BJ (cell line): ENCODE measurements at regions of chr6 and their contacts with region 1.

Region 1: DNA sequence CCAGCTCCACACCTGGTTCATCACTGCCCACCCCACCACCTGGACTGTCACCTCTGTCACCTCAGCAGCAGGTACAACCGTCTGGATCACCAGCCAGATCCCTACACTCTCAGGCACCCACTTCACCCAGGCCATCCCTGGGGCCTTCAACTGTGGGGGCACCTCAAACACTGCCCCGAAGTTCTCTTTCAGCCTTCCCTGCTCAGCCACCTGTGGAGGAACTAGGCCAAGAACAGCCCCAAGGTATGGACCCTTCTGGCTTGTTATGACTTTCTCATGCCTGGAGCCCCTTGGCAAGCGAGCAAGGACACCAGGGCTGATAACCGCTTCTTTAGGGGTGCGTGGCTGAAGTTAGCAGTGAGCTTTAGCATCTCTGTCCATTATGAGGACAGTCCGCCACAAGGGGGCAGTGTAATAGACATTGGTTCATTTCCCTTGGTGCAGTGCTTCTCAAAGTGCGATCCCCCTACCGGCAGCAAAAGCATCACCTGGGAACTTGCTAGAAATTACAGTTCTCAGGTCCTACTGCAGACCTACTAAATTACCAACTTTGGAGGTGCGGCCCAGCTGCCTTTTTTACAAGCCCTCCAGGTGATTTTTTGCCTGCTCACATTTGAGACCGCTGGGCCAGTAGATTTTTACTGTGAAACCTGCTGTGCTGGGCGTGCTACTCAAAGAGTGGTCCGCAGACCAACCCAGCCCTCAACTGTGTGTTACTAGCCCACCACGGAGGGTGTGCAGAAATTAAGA is 32.5 kb downstream of the PNPLA1 start:
- DNase-seq: peak; percentile 26
- H3K4me3 ChIP-seq: no peak overlapping the region
- H3K27me3 ChIP-seq: peaks cover 4% of the 10 kb centered on the region
- CTCF ChIP-seq: peak; percentile 96

Region 2: GRCh38 chr6:36285187-36285671 is 17.2 kb before region 1 on chr6:
- CTCF ChIA-PET with region 1: interaction called, 29 read pairs
- POLR2A ChIA-PET with region 1: interaction called, 3 read pairs
- DNase-seq: no peak
- H3K4me3 ChIP-seq: no peak overlapping the region
- H3K27me3 ChIP-seq: peaks cover 32% of the 10 kb centered on the region
- CTCF ChIP-seq: no peak

Region 3: GRCh38 chr6:36290661-36291620 is 11.5 kb before region 1 on chr6:
- CTCF ChIA-PET with region 1: interaction called, 27 read pairs
- POLR2A ChIA-PET with region 1: interaction called, 3 read pairs
- DNase-seq: no peak
- H3K4me3 ChIP-seq: no peak overlapping the region
- H3K27me3 ChIP-seq: peaks cover 10% of the 10 kb centered on the region
- CTCF ChIP-seq: no peak

Region 4: GRCh38 chr6:36314221-36315014 is 12.0 kb after region 1 on chr6:
- CTCF ChIA-PET with region 1: interaction called, 72 read pairs
- POLR2A ChIA-PET with region 1: no interaction called
- DNase-seq: no peak
- H3K4me3 ChIP-seq: no peak overlapping the region
- H3K27me3 ChIP-seq: peaks cover 27% of the 10 kb centered on the region
- CTCF ChIP-seq: no peak

Region 5: GRCh38 chr6:36350681-36351571 is 48.5 kb after region 1 on chr6:
- CTCF ChIA-PET with region 1: interaction called, 14 read pairs
- POLR2A ChIA-PET with region 1: no interaction called
- DNase-seq: peak; percentile 17
- H3K4me3 ChIP-seq: no peak overlapping the region
- H3K27me3 ChIP-seq: peaks cover 1% of the 10 kb centered on the region; the same call in 1 of the 2 replicates
- CTCF ChIP-seq: no peak

Region 6: DNA sequence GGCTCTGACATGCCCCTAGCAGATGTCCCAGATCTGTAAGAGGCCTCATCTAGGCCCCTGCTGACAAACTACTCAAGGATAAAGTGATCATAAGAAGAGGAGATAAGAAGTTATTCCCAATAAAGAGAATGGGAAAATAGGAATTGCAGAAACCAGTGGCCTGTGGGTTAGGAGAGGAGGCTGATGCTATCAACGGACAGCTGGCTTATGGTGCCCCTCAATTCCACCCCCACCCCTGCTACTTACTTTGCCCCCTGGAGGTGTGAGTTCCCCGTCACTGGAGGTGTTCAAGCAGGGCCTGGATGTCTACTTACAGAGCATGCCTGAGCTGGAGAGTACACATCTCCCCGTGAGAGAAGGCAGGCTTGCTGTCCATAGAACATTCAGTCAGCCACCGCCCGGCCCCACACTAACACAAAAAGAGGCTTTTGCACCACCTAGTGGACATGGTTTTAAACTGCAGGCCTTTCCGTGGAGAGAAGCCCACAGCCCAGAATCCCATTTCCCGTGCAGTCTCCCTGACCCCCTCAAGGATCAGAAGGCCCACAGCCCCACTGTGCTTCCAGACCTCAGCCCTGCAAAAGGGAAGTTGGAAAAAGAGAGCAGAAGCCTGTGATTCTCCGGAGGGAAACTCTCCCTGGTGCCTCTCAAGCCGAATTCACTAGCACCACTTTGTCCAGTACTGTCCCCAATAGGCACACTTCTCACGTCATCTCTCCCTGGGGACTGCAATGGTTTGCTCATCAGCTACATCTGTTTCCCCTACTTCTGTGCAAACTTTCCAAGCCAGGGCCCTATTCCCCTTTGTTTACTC is 58.0 kb after region 1 on chr6:
- CTCF ChIA-PET with region 1: interaction called, 24 read pairs
- POLR2A ChIA-PET with region 1: no interaction called
- DNase-seq: no peak
- H3K4me3 ChIP-seq: no peak overlapping the region
- H3K27me3 ChIP-seq: peaks cover 1% of the 10 kb centered on the region; the same call in 1 of the 2 replicates
- CTCF ChIP-seq: peak; percentile 83